ENCODE measurements at regions of chr14 and their contacts with region 1.

Region 1: GRCh38 chr14:31229638-31230229 is 22.1 kb upstream of the HECTD1 start:
- DNase-seq: peak; percentile 86 to 92
- ATAC-seq: peak; percentile 99 to 100
- H3K4me3 ChIP-seq: no peak overlapping the region
- H3K27ac ChIP-seq: peak overlapping the region; percentile 83 to 89 (median 86)
- H3K4me1 ChIP-seq: peaks cover 9 to 24% of the 10 kb centered on the region in 2 donors
- H3K27me3 ChIP-seq: no peaks in the 10 kb centered on the region
- CTCF ChIP-seq: no peak
- POLR2A ChIP-seq: peak; percentile 50 to 68

Region 2: GRCh38 chr14:30751641-30752416 is 477.9 kb before region 1 on chr14:
- in situ Hi-C with region 1: no loop called
- intact Hi-C with region 1: no loop called
- DNase-seq: no peak
- ATAC-seq: no peak
- H3K4me3 ChIP-seq: no peak overlapping the region
- H3K27ac ChIP-seq: no peak overlapping the region
- H3K4me1 ChIP-seq: no peaks in the 10 kb centered on the region
- H3K27me3 ChIP-seq: no peaks in the 10 kb centered on the region
- CTCF ChIP-seq: no peak
- POLR2A ChIP-seq: no peak

Region 3: DNA sequence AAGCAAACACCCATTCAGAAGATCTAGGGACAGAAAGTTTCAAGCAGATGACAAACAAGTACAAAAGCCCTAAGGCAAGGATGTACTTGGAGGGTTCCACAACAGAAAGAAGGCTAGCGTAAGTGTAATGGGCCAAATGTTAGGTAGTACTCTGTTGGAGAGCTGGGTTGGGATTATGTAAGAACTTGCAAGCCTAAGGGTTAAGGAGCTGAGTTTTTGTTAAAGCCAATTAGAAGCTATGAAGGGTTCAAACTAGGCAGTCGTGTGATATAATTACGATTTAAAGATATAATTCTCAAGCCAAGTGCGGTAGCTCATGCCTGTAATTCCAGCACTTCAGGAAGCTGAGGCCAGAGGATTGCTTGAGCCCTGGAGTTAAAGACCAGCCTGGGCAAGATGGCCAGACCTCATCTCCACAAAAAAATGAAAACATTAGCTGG is 63.4 kb before region 1 on chr14:
- in situ Hi-C with region 1: no loop called
- intact Hi-C with region 1: loop called (anchors 1 kb)
- DNase-seq: no peak
- ATAC-seq: peak; percentile 45 to 58
- H3K4me3 ChIP-seq: no peak overlapping the region
- H3K27ac ChIP-seq: peak overlapping the region; percentile 84 to 89 (median 86)
- H3K4me1 ChIP-seq: peaks cover 15 to 31% of the 10 kb centered on the region in 2 donors
- H3K27me3 ChIP-seq: no peaks in the 10 kb centered on the region
- CTCF ChIP-seq: no peak
- POLR2A ChIP-seq: no peak

Region 4: GRCh38 chr14:31320216-31320615 is 90.5 kb after region 1 on chr14:
- in situ Hi-C with region 1: loop called in 1 of 4 experiments (anchors 25 kb)
- intact Hi-C with region 1: loop called (anchors 5 kb)
- DNase-seq: peak; percentile 76 to 88
- ATAC-seq: peak; percentile 94 to 99
- H3K4me3 ChIP-seq: no peak overlapping the region
- H3K27ac ChIP-seq: peak overlapping the region; percentile 60 to 81 (median 76)
- H3K4me1 ChIP-seq: peaks cover 16% of the 10 kb centered on the region in 2 donors
- H3K27me3 ChIP-seq: no peaks in the 10 kb centered on the region
- CTCF ChIP-seq: no peak
- POLR2A ChIP-seq: no peak

Region 5: DNA sequence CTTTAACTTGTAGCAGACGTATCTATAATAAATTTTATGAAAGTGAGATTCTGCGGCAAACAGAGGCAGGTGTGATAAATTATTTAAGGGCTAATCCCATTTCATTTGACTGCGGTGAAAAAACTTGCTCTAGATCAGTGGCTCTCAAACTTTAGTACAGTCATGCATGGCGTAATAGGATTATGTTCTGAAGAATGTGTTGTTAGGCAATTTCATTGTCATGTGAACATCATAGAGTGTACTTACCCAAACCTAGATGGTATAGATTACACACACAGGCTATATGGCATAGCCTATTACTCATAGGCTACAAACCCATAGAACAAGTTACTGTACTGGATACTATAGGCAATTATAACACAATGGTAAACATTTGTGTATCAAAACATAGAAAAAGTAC is 106.9 kb after region 1 on chr14:
- in situ Hi-C with region 1: loop called in 1 of 4 experiments (anchors 25 kb)
- intact Hi-C with region 1: loop called (anchors 1 kb)
- DNase-seq: no peak
- ATAC-seq: peak; percentile 87 to 91
- H3K4me3 ChIP-seq: no peak overlapping the region
- H3K27ac ChIP-seq: peak overlapping the region; percentile 78 to 91 (median 87)
- H3K4me1 ChIP-seq: peaks cover 18 to 23% of the 10 kb centered on the region in 2 donors
- H3K27me3 ChIP-seq: no peaks in the 10 kb centered on the region
- CTCF ChIP-seq: peak in 1 of 5 experiments; percentile 17
- POLR2A ChIP-seq: no peak

Measured in gastrocnemius medialis (tissue), 4 donors.